ENCODE measurements at regions of chr5 and their contacts with region 1.

Region 1: DNA sequence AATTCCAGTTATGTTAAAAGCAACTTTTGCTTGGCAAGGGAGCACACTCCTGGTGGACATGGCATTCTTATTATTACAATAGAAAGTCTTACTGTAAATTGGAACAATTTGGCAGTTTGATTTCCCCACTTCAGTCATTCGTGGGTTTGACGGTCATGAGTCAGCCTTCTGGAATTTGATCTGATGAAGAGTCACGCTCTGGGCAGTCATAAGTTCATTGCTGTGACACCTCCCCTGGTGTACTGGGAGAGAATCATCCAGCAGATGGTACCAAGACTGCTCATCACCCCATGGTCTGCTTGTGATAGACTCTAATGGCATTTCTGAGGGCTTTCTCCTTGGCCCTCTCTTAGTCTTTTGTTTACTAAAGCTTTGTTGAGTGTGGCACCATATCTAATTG is 53.8 kb downstream of the GLRA1 start:
- DNase-seq: no peak
- ATAC-seq: no peak
- H3K4me3 Mint-ChIP-seq: no peak overlapping the region
- H3K27ac Mint-ChIP-seq: no peak overlapping the region
- H3K4me1 Mint-ChIP-seq: no peaks in the 10 kb centered on the region
- H3K27me3 Mint-ChIP-seq: no peaks in the 10 kb centered on the region; the same call in 1 of the 2 replicates
- CTCF ChIP-seq: no peak

Region 2: DNA sequence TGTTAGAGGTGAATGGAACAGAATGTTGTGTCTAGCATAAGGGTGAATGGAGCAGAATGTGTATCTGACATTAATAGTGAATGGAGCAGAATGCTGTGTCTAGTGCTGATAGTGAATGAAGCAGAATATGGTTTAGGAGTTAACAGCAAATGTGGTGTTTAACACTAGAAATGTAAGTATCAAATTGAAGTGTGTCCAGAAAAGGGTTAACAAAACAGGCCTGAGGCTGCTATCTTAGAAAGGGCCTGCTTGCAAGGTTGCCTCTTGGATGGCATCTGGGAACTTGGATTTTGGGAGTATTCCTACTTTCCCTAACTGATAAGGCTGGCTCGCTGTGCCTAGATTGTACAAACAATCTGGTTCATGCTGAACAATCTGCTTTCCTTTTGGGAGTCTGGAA is 22.9 kb before region 1 on chr5:
- CTCF ChIA-PET with region 1: no interaction called
- POLR2A ChIA-PET with region 1: no interaction called
- DNase-seq: no peak
- ATAC-seq: no peak
- H3K4me3 Mint-ChIP-seq: no peak overlapping the region
- H3K27ac Mint-ChIP-seq: no peak overlapping the region
- H3K4me1 Mint-ChIP-seq: no peaks in the 10 kb centered on the region
- H3K27me3 Mint-ChIP-seq: 0 out of 2 replicates have a peak, but pooled peaks cover 3% of the 10 kb centered on the region
- CTCF ChIP-seq: no peak

Region 3: GRCh38 chr5:151892393-151892792 is 21.6 kb after region 1 on chr5:
- CTCF ChIA-PET with region 1: no interaction called
- POLR2A ChIA-PET with region 1: no interaction called
- DNase-seq: no peak
- ATAC-seq: no peak
- H3K4me3 Mint-ChIP-seq: no peak overlapping the region
- H3K27ac Mint-ChIP-seq: no peak overlapping the region
- H3K4me1 Mint-ChIP-seq: peaks cover 10% of the 10 kb centered on the region
- H3K27me3 Mint-ChIP-seq: peaks cover 63% of the 10 kb centered on the region
- CTCF ChIP-seq: no peak

Region 4: GRCh38 chr5:151912360-151912759 is 41.5 kb after region 1 on chr5:
- CTCF ChIA-PET with region 1: no interaction called
- POLR2A ChIA-PET with region 1: no interaction called
- DNase-seq: no peak
- ATAC-seq: peak; percentile 76
- H3K4me3 Mint-ChIP-seq: no peak overlapping the region
- H3K27ac Mint-ChIP-seq: no peak overlapping the region
- H3K4me1 Mint-ChIP-seq: peaks cover 11% of the 10 kb centered on the region
- H3K27me3 Mint-ChIP-seq: peaks cover 89% of the 10 kb centered on the region
- CTCF ChIP-seq: no peak

Region 5: GRCh38 chr5:152136321-152136720 is 265.5 kb after region 1 on chr5:
- CTCF ChIA-PET with region 1: no interaction called
- POLR2A ChIA-PET with region 1: interaction called, 14 read pairs
- DNase-seq: no peak
- ATAC-seq: no peak
- H3K4me3 Mint-ChIP-seq: no peak overlapping the region
- H3K27ac Mint-ChIP-seq: no peak overlapping the region
- H3K4me1 Mint-ChIP-seq: no peaks in the 10 kb centered on the region
- H3K27me3 Mint-ChIP-seq: peaks cover 7% of the 10 kb centered on the region; the same call in 1 of the 2 replicates
- CTCF ChIP-seq: no peak

Measured in WTC11 (cell line).